Naive thymus-derived CD4-positive, alpha-beta T cell (primary cell): ENCODE measurements at regions of chr2 and their contacts with region 1.

Region 1: GRCh38 chr2:174717273-174717672 is 47.0 kb downstream of the CHRNA1 start:
- DNase-seq: peak in 8 of 9 donors; percentile 34 to 76 (median 69)
- ATAC-seq: peak; percentile 75
- H3K4me3 ChIP-seq: peak overlapping the region; percentile 39
- H3K4me3 Mint-ChIP-seq: peak overlapping the region; percentile 63 to 88 (median 76)
- H3K27ac ChIP-seq: no peak overlapping the region
- H3K27ac Mint-ChIP-seq: peak overlapping the region; percentile 4 to 68 (median 25)
- H3K4me1 ChIP-seq: peaks cover 15 to 21% of the 10 kb centered on the region in 2 donors
- H3K4me1 Mint-ChIP-seq: peaks cover 21 to 41% (median 36%) of the 10 kb centered on the region in 7 donors
- H3K27me3 ChIP-seq: no peaks in the 10 kb centered on the region
- H3K27me3 Mint-ChIP-seq: peaks cover 0 to 10% (median 0%) of the 10 kb centered on the region in 5 donors

Region 2: GRCh38 chr2:174729797-174730697 is 12.8 kb after region 1 on chr2:
- CTCF ChIA-PET with region 1: no interaction called
- POLR2A ChIA-PET with region 1: interaction called, 3 read pairs
- intact Hi-C with region 1: loop called (anchors 1 to 2 kb)
- DNase-seq: peak; percentile 21 to 53 (median 37)
- ATAC-seq: peak; percentile 76
- H3K4me3 ChIP-seq: peak overlapping the region; percentile 75
- H3K4me3 Mint-ChIP-seq: peak overlapping the region; percentile 84 to 96 (median 89)
- H3K27ac ChIP-seq: no peak overlapping the region
- H3K27ac Mint-ChIP-seq: peak overlapping the region in 5 of 9 donors; percentile 35 to 84 (median 57)
- H3K4me1 ChIP-seq: peaks cover 3 to 4% of the 10 kb centered on the region in 2 donors
- H3K4me1 Mint-ChIP-seq: peaks cover 6 to 28% (median 20%) of the 10 kb centered on the region in 7 donors
- H3K27me3 ChIP-seq: no peaks in the 10 kb centered on the region
- H3K27me3 Mint-ChIP-seq: peaks cover 0 to 71% (median 12%) of the 10 kb centered on the region in 5 donors